AG04450 (cell line): ENCODE measurements at regions of chr11 and their contacts with region 1.

Region 1: DNA sequence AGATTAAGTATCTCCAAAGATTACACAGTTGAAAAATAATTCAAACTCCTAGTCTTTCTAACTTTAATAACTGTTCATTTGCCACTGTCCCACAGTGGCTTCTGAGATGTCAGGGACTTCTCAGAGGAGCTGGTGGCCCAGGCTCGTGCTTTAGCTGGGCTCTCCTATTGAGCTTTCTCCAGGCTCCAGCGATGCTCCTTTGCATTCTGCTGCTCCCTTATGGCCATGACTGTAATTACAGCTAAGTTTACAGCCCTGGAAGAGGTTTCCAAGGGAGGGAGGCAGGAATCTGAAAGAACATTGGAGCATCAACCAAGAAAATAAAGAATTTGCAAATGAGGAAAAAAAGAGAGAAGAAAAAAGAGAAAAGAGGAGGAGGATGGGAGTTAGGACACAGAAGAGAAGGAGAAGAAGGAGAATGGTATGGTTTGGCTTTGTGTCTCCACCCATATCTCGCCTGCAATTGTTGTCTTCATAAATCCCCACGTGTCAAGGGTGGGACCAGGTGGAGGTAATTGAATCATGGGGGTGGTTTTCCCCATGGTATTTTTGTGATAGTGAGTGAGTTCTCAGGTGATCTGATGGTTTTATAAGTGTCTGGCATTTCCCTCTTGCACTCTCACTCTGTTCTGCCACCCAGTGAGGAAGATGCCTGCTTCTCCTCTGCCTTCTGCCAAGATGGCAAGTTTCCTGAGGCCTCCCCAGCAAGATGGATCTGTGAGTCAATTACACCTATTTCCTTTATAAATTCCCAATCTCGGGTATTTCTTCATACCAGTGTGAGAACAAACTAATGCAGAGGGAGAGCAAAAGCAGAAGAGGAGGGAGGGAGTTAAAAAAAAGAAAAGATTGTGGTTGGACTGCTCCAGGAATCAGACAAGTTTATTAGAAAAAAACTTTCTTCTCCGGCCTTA is 857.0 kb downstream of the KCNA4 start:
- DNase-seq: peak; percentile 55
- H3K4me3 ChIP-seq: no peak overlapping the region
- H3K27ac ChIP-seq: no peak overlapping the region
- H3K27me3 ChIP-seq: no peaks in the 10 kb centered on the region
- CTCF ChIP-seq: peak; percentile 82

Region 2: DNA sequence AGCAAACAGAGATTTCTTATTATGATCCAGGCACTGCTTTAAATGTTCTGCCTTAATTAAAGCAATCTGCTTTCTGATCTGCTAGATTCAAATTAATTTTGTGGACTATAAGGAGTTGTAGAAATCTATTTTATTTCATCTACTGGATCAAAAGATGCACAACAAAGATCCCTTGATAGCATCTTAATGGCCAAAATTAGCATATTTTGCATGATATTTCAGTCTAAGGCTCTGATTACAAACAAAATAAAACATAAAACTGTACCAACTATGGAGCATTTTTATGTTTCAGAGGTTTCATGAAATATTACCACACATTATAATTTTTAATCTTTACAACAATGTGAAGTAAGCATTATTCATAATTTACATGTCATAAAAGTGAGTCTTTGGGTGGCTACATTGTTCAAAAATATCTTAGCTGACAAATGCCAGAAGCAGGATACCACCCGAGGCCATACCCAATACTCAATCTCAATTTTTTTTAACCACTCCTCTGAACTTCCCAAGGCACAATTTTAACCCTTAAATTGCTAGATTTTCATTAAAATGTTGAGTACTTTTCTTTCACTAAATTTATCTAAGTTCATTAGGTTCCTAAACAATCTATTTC is 72.5 kb before region 1 on chr11:
- CTCF ChIA-PET with region 1: no interaction called
- POLR2A ChIA-PET with region 1: no interaction called
- DNase-seq: no peak
- H3K4me3 ChIP-seq: no peak overlapping the region
- H3K27ac ChIP-seq: no peak overlapping the region
- H3K27me3 ChIP-seq: no peaks in the 10 kb centered on the region
- CTCF ChIP-seq: no peak

Region 3: DNA sequence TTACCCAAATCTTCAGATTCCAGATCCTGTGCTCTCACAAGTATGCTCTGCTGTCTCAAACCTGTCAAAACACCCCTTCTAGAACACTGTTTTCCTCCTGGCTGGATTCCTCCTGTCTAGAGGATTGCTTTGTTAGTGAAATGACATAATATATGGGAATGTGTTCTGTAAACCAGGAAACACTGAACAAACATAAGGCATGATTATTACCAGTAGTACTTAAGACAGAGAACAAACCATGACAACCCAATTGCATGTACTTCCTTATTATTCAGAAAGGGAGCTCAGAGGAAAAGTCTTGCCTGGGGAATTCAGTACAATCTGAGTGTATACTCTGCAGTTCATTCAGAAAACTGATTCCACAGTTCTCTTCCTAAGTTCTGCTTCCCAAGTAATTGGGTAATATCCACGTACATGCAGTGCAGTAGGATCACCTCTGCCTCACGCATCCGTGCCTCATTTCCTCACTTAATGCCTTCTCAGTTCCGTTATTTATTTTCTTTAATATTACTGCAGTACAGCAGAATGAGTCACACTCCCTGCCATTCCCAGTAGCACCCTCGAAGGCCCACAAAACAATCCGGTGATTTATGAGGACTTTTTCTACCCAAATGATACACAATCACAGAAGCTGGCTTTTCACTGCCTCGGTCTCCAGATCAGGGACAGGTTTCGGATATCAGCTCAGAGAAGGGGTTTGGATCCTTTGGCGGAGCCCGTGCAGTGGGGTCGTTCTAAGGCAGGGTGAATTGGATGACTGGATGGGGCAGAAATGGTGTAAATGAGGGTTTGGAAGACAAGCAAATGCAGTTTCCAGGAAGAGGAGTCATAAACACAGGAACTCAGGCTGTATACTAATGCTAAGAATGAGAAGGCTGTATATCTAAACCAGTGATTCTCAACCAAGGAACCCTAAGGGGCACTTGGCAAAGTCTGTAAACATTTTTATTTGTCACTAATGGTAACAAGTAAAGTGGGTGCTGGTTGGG is 39.8 kb before region 1 on chr11:
- CTCF ChIA-PET with region 1: interaction called, 4 read pairs
- POLR2A ChIA-PET with region 1: interaction called, 14 read pairs
- DNase-seq: peak; percentile 90
- H3K4me3 ChIP-seq: peak overlapping the region; percentile 10
- H3K27ac ChIP-seq: peak overlapping the region; percentile 89
- H3K27me3 ChIP-seq: no peaks in the 10 kb centered on the region
- CTCF ChIP-seq: no peak

Region 4: GRCh38 chr11:29328961-29329441 is 169.2 kb after region 1 on chr11:
- CTCF ChIA-PET with region 1: interaction called, 25 read pairs
- POLR2A ChIA-PET with region 1: no interaction called
- DNase-seq: peak; percentile 70
- H3K4me3 ChIP-seq: no peak overlapping the region
- H3K27ac ChIP-seq: no peak overlapping the region
- H3K27me3 ChIP-seq: no peaks in the 10 kb centered on the region
- CTCF ChIP-seq: peak; percentile 83